ENCODE measurements at regions of chr7 and their contacts with region 1.

Region 1: GRCh38 chr7:87129848-87130247 is 22.4 kb upstream of the DMTF1 start:
- DNase-seq: no peak
- ATAC-seq: no peak
- H3K4me3 ChIP-seq: no peak overlapping the region
- H3K27ac ChIP-seq: no peak overlapping the region
- H3K4me1 ChIP-seq: peaks cover 1% of the 10 kb centered on the region
- H3K27me3 ChIP-seq: no peaks in the 10 kb centered on the region

Region 2: DNA sequence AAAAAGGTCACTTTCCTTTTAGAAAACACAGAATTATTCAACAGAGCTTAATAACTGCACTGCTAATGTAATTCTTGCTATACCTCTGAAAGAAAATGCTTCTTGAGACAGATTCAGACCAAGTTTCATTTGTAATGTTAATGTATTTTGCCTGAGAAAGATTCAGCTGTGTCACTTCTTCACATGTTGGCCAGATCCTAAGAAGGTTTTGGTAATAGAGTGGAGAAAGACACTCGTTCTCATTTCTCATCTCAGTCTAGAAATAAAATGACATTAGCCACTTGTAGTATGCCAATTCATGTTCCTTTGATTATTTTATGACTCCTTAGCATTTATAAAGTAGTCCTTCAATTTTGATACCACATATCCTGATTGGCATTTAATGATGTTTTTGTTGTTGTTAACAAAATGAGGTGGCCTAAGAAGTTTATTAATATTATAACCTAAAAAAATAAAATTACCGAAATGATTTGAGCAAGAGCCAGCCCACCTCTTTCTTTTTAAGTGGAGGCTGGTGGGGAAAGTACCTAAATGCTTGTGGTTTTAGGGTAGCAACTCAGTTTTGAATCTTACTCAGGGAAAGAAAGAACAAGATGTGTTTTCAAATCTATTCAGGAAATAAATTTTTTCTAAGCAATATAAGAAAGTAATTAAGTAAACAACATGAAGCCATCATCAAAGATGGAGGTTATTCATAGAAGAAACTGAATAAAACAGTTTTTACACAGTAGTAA is 54.0 kb before region 1 on chr7:
- intact Hi-C with region 1: loop called in 1 of 4 experiments (anchors 10 kb)
- DNase-seq: no peak
- ATAC-seq: no peak
- H3K4me3 ChIP-seq: no peak overlapping the region
- H3K27ac ChIP-seq: no peak overlapping the region
- H3K4me1 ChIP-seq: no peaks in the 10 kb centered on the region
- H3K27me3 ChIP-seq: no peaks in the 10 kb centered on the region

Measured in right cardiac atrium (tissue), 5 donors.